ENCODE measurements at regions of chr12 and their contacts with region 1.

Region 1: GRCh38 chr12:68610370-68611093 is at the start of gene RAP1B:
- DNase-seq: peak; percentile 80 to 96 (median 88)
- ATAC-seq: peak; percentile 81
- H3K4me3 ChIP-seq: peak within 1 kb of the TSS; percentile 95 to 97
- H3K4me3 Mint-ChIP-seq: peak within 1 kb of the TSS; percentile 93
- H3K27ac ChIP-seq: peak within 1 kb of the TSS; percentile 93 to 96
- H3K27ac Mint-ChIP-seq: peak within 1 kb of the TSS; percentile 99
- H3K4me1 ChIP-seq: peaks cover 26% of the 10 kb centered on the region
- H3K4me1 Mint-ChIP-seq: peaks cover 38% of the 10 kb centered on the region
- H3K27me3 ChIP-seq: no peaks in the 10 kb centered on the region
- H3K27me3 Mint-ChIP-seq: no peaks in the 10 kb centered on the region
- CTCF ChIP-seq: no peak
- total RNA-seq, gene RAP1B: 299 TPM

Region 2: GRCh38 chr12:68331869-68332727 is 278.4 kb before region 1 on chr12 and contains the start of gene MDM1:
- CTCF ChIA-PET with region 1: no interaction called
- POLR2A ChIA-PET with region 1: interaction called, 5 read pairs
- intact Hi-C with region 1: loop called (anchors 1 to 5 kb)
- DNase-seq: peak; percentile 88 to 99 (median 96)
- ATAC-seq: peak; percentile 95
- H3K4me3 ChIP-seq: peak within 1 kb of the TSS; percentile 56 to 71
- H3K4me3 Mint-ChIP-seq: peak within 1 kb of the TSS; percentile 88
- H3K27ac ChIP-seq: peak within 1 kb of the TSS; percentile 45 to 46
- H3K27ac Mint-ChIP-seq: peak within 1 kb of the TSS; percentile 89
- H3K4me1 ChIP-seq: peaks cover 24% of the 10 kb centered on the region
- H3K4me1 Mint-ChIP-seq: peaks cover 49% of the 10 kb centered on the region
- H3K27me3 ChIP-seq: no peaks in the 10 kb centered on the region
- H3K27me3 Mint-ChIP-seq: no peaks in the 10 kb centered on the region
- CTCF ChIP-seq: no peak
- total RNA-seq, gene MDM1: 10.6 to 12.0 TPM

Region 3: DNA sequence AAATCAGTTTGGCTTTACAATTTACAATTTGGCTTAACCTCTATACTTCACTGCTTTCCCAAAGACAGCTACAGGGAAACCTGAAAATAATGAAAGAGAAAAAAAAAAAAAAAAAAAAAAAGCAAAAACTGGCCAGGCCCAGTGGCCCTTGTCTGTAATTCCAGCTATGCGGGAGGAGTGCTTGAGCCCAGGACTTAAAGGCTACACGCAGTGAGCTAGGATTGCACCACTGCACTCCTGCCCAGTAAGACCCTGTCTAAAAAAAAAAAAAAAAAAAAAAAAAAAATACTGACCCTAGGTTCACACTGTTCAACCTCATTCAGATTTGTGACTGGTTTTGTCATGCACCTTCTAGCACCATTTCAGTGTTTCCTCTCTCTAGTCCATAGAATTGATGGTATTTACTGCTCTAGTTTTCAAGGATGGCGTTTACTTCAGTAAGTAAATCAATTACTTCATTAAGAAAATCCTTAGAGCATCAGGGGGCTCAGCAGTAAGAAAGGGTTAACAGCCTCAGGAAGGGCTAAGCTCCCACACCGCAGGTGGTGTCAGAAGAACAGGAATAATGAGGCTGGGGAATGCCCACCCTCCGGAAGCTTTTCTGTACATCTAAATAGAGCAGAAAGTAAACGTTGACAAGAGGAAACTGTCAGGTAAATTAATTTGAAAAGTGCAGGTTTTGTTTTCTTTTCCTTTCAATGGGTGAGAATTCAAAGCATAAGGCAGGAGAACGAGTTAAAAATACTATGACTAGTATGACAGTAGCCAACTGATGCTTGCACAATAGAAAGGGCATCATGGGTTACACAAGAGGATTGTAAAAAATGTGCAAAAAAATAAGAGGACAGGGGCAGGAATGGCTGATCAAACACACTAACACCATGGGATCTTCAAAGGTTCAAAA is 163.4 kb before region 1 on chr12:
- CTCF ChIA-PET with region 1: no interaction called
- POLR2A ChIA-PET with region 1: no interaction called
- intact Hi-C with region 1: loop called in 1 of 2 experiments (anchors 5 kb)
- DNase-seq: no peak
- ATAC-seq: no peak
- H3K4me3 ChIP-seq: no peak overlapping the region
- H3K4me3 Mint-ChIP-seq: no peak overlapping the region
- H3K27ac ChIP-seq: peak overlapping the region in 1 of 2 experiments; percentile 63
- H3K27ac Mint-ChIP-seq: no peak overlapping the region
- H3K4me1 ChIP-seq: peaks cover 46% of the 10 kb centered on the region
- H3K4me1 Mint-ChIP-seq: peaks cover 63% of the 10 kb centered on the region
- H3K27me3 ChIP-seq: no peaks in the 10 kb centered on the region
- H3K27me3 Mint-ChIP-seq: no peaks in the 10 kb centered on the region
- CTCF ChIP-seq: no peak

Region 4: GRCh38 chr12:68587448-68587873 is 23.1 kb before region 1 on chr12:
- CTCF ChIA-PET with region 1: no interaction called
- POLR2A ChIA-PET with region 1: interaction called, 64 read pairs
- intact Hi-C with region 1: loop called (anchors 2 kb)
- DNase-seq: peak in 7 of 9 experiments; percentile 11 to 75 (median 56)
- ATAC-seq: peak; percentile 71
- H3K4me3 ChIP-seq: no peak overlapping the region
- H3K4me3 Mint-ChIP-seq: peak overlapping the region; percentile 56
- H3K27ac ChIP-seq: peak overlapping the region in 1 of 2 experiments; percentile 44
- H3K27ac Mint-ChIP-seq: peak overlapping the region; percentile 87
- H3K4me1 ChIP-seq: peaks cover 66% of the 10 kb centered on the region
- H3K4me1 Mint-ChIP-seq: peaks cover 62% of the 10 kb centered on the region
- H3K27me3 ChIP-seq: no peaks in the 10 kb centered on the region
- H3K27me3 Mint-ChIP-seq: no peaks in the 10 kb centered on the region
- CTCF ChIP-seq: no peak

Region 5: DNA sequence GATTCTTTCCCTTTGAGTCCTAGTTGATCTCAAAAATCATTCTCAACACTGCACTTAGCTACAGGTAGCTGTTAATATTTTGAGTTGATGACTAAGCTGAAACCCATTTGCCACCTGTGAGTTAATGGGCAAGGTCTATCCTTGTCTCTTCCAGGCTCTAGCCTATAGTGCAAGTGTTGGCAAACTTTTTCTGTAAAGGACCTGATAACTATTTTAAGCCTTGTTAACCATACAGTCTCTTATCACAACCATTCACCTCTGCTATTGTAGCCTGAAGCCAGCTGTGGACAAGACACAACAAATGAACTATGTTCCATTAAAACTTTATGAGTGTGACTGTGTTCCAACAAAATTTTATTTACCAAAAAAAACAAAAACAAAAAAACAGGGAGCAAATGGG is 19.5 kb after region 1 on chr12:
- CTCF ChIA-PET with region 1: no interaction called
- POLR2A ChIA-PET with region 1: interaction called, 13 read pairs
- intact Hi-C with region 1: loop called in 1 of 2 experiments (anchors 2 kb)
- DNase-seq: no peak
- ATAC-seq: peak; percentile 35
- H3K4me3 ChIP-seq: no peak overlapping the region
- H3K4me3 Mint-ChIP-seq: peak overlapping the region; percentile 23
- H3K27ac ChIP-seq: peak overlapping the region in 1 of 2 experiments; percentile 42
- H3K27ac Mint-ChIP-seq: peak overlapping the region; percentile 70
- H3K4me1 ChIP-seq: peaks cover 82% of the 10 kb centered on the region
- H3K4me1 Mint-ChIP-seq: peaks cover 85% of the 10 kb centered on the region
- H3K27me3 ChIP-seq: no peaks in the 10 kb centered on the region
- H3K27me3 Mint-ChIP-seq: no peaks in the 10 kb centered on the region
- CTCF ChIP-seq: no peak

Region 6: DNA sequence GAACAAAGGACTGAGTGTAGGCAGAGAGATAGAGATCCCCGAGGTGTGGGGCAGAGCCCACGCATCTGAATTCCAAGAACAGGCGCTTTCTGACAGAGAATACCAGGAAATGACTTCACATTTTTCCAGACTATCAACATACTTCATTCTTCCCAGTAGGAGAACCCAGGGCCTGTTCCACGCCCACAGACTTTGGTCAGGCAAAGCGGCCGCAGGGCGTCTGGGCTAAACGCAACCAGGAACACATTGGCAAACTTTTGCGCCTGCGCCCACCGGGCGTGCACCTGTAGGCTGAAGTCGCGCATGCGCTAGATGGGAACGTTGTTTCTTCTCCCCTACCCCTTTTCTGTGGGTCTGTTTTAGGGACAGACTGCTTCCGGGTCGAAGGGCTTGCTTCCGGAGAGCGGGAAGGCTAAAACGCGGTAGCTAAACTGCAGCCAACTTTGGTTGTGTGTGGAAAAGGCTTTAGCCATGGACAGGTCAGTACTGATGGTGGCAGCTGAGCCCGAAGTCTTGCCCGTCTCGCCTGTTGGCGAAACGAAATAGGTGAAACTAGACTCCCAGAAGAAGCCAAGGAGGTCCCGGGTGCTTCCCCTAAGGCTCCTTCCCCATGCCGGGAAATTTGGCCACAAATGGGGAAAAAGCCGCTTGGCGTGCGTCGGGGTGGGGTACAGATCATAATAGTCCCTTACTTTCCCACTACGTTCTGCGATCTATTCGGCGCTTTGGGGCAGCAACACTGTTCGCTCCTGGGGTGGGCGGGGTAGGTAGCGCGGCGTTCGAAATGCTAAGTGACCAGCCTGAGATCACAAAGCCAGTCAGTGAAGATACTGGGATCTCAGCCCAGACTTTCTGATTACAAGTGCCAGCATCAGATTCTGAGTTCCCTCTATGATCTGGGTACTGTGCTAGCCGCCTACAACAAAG is 76.3 kb after region 1 on chr12 and contains the start of gene NUP107:
- CTCF ChIA-PET with region 1: interaction called, 3 read pairs
- POLR2A ChIA-PET with region 1: interaction called, 7 read pairs
- intact Hi-C with region 1: loop called (anchors 1 to 2 kb)
- DNase-seq: peak; percentile 95 to 99 (median 98)
- ATAC-seq: peak; percentile 96
- H3K4me3 ChIP-seq: peak within 1 kb of the TSS; percentile 91
- H3K4me3 Mint-ChIP-seq: peak within 1 kb of the TSS; percentile 99
- H3K27ac ChIP-seq: peak within 1 kb of the TSS; percentile 73 to 78
- H3K27ac Mint-ChIP-seq: peak within 1 kb of the TSS; percentile 100
- H3K4me1 ChIP-seq: peaks cover 24% of the 10 kb centered on the region
- H3K4me1 Mint-ChIP-seq: peaks cover 41% of the 10 kb centered on the region
- H3K27me3 ChIP-seq: no peaks in the 10 kb centered on the region
- H3K27me3 Mint-ChIP-seq: no peaks in the 10 kb centered on the region
- CTCF ChIP-seq: no peak
- total RNA-seq, gene NUP107: 40.1 to 45.9 TPM

Region 7: GRCh38 chr12:69239352-69239921 is 628.9 kb after region 1 on chr12 and contains the start of gene CPSF6:
- CTCF ChIA-PET with region 1: no interaction called
- POLR2A ChIA-PET with region 1: no interaction called
- intact Hi-C with region 1: loop called in 1 of 2 experiments (anchors 10 kb)
- DNase-seq: peak; percentile 94 to 99 (median 96)
- ATAC-seq: peak; percentile 88
- H3K4me3 ChIP-seq: peak within 1 kb of the TSS; percentile 84 to 95
- H3K4me3 Mint-ChIP-seq: peak within 1 kb of the TSS; percentile 95
- H3K27ac ChIP-seq: peak within 1 kb of the TSS; percentile 68 to 89
- H3K27ac Mint-ChIP-seq: peak within 1 kb of the TSS; percentile 99
- H3K4me1 ChIP-seq: peaks cover 36% of the 10 kb centered on the region
- H3K4me1 Mint-ChIP-seq: peaks cover 51% of the 10 kb centered on the region
- H3K27me3 ChIP-seq: no peaks in the 10 kb centered on the region
- H3K27me3 Mint-ChIP-seq: no peaks in the 10 kb centered on the region
- CTCF ChIP-seq: no peak
- total RNA-seq, gene CPSF6: 78.9 to 81.3 TPM

Measured in CD8-positive, alpha-beta T cell (primary cell).